Right cardiac atrium (tissue), 5 donors: ENCODE measurements at regions of chr13 and their contacts with region 1.

Region 1: DNA sequence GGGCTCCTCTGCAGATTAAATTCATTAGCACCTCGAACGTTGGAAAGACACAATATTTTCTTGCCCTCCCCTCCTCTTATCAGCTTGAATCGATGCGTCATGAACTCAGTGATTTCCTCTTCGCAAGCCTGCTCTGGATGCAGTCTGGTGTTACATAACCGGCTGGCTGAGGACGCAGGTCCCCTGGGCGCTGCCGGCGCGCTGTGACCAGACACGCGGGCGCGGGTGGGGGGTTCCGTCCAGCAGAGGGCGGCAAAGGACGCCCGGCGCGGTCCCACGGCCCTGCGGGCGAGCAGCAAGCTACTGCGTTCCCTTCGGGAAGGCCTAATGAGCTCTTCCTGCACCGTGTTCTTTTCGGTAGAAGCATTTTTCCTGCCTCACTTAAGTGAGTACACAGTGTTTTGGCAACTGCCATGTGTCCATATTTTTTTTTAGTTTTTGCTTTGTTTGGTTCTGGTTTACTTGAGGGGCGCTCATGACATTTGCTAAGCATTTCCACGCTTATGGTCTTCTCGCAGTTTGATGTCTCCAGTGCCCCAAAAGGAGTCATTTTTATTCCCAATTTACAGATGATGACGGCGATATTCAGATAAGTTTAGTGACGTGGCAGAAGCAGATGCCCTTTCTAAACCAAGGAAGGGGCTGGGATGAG is 112.2 kb upstream of the MBNL2 start:
- DNase-seq: peak; percentile 93 to 97 (median 97)
- ATAC-seq: peak; percentile 97
- H3K4me3 ChIP-seq: no peak overlapping the region
- H3K27ac ChIP-seq: no peak overlapping the region
- H3K4me1 ChIP-seq: peaks cover 6% of the 10 kb centered on the region
- H3K27me3 ChIP-seq: no peaks in the 10 kb centered on the region

Region 2: GRCh38 chr13:97212601-97213040 is 102.7 kb after region 1 on chr13:
- intact Hi-C with region 1: loop called (anchors 5 to 10 kb)
- DNase-seq: no peak
- ATAC-seq: peak; percentile 62 to 67
- H3K4me3 ChIP-seq: no peak overlapping the region
- H3K27ac ChIP-seq: no peak overlapping the region
- H3K4me1 ChIP-seq: no peaks in the 10 kb centered on the region
- H3K27me3 ChIP-seq: no peaks in the 10 kb centered on the region

Region 3: GRCh38 chr13:97306645-97307044 is 196.7 kb after region 1 on chr13:
- intact Hi-C with region 1: no loop called
- DNase-seq: no peak
- ATAC-seq: no peak
- H3K4me3 ChIP-seq: no peak overlapping the region
- H3K27ac ChIP-seq: no peak overlapping the region
- H3K4me1 ChIP-seq: peaks cover 21% of the 10 kb centered on the region
- H3K27me3 ChIP-seq: no peaks in the 10 kb centered on the region

Region 4: GRCh38 chr13:97344265-97345175 is 234.6 kb after region 1 on chr13:
- intact Hi-C with region 1: loop called in 3 of 4 experiments (anchors 5 kb)
- DNase-seq: peak; percentile 61 to 85 (median 79)
- ATAC-seq: peak; percentile 80 to 84
- H3K4me3 ChIP-seq: no peak overlapping the region
- H3K27ac ChIP-seq: no peak overlapping the region
- H3K4me1 ChIP-seq: peaks cover 2% of the 10 kb centered on the region
- H3K27me3 ChIP-seq: no peaks in the 10 kb centered on the region

Region 5: DNA sequence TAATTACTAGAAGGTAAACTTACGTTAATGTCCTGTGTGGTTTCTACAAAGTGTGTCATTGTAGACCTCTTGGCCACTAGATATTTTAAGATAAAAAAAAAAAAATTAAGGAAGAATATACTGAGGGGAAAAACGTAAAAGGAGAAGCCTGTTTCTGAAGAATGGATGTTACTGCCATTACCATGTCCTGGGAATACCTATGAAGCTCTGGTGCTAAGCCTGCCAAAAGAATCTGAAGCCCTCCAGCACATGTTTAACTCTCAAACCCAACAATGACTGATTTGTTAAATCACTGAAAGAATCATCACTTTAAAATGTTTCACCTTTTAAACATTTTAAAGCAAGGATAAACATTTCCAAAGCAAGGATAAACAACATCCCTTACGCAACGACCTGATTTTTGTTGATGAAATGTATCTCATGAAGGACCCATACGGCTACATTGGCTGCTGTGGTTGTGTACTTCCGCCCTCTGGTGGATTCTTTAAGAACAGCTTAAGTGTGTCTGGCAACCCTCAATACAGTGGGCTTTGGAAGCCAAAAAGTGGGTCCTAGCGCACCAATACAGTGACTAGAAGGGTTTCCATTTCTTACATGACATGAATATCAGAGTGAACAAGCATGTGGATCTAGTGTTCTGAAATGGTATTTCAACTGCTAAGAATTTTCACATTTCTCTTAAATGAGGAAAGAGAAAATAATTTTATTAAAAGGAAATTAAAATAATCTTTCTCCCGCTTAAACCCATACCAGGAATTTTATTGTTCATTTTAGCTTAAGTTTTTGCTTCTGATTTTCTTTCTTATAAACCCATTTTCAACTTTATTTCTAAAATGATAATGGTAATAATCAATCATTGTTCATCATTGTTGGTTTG is 249.5 kb after region 1 on chr13:
- intact Hi-C with region 1: loop called (anchors 2 to 5 kb)
- DNase-seq: no peak
- ATAC-seq: peak; percentile 87 to 89
- H3K4me3 ChIP-seq: no peak overlapping the region
- H3K27ac ChIP-seq: no peak overlapping the region
- H3K4me1 ChIP-seq: peaks cover 9% of the 10 kb centered on the region
- H3K27me3 ChIP-seq: no peaks in the 10 kb centered on the region